ENCODE measurements at regions of chr1 and their contacts with region 1.

Region 1: DNA sequence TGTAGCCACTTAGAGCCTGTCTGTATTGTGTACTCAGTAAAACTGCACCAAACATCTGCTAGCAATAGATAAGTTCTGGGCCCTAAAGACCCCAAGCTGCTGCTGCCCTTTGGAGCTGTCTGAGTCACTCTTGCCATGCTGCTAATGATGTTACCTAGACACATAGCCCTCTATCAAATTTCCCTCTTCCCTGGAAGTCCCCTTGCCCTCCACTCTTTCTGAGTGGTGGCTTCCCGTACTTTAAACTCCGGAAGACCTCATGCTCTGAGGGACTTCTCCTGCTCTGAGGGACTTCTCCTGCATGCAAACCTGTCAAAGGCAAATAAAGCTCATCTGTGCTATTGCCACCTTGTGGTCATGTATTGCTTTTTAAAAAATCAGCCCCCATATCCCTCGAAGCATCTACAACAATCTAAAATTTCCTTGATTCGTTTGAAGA is 34.0 kb downstream of the FH start:
- DNase-seq: peak; percentile 73
- ATAC-seq: peak; percentile 18; the same call in 1 of the 2 replicates
- H3K4me3 ChIP-seq: no peak overlapping the region
- H3K27ac ChIP-seq: no peak overlapping the region; the same call in 1 of the 2 replicates
- H3K4me1 ChIP-seq: peaks cover 58% of the 10 kb centered on the region
- H3K27me3 ChIP-seq: no peaks in the 10 kb centered on the region
- CTCF ChIP-seq: peak; percentile 97

Region 2: DNA sequence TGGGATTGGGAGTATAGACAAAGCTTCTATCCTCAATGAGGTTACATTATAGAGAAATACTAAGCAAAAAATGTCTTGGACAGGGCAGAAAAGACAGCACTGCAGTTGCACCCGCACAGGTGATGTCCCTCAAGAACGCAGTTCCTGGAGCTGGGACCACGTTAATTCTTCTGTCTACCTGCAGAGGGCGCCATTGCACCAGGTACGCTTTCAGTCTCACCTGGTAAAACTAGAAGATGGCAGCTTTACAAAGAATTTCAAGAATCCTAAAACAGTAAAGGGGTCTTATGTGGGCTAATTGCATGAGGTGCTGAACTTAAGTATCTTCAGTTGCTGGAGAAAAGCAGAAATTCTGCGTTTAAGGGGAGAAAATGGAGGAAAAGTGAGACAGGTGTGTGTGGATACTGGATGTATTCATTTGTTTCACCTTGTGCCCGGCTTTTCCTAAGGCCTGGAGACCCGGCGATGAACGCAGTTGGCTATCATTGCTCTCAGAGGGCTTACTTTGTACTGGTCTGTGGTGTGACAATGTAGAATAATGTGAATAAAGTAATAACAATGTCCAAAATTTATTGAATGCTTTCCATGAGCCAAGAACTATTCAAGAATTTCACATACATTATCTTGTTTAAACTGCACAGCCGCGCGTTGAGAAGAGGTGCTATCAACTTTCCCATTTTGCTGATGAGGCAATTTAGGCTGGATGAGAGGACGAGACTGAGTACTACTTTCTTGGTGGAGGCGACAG is 597.4 kb before region 1 on chr1:
- CTCF ChIA-PET with region 1: no interaction called
- POLR2A ChIA-PET with region 1: no interaction called
- intact Hi-C with region 1: loop called (anchors 5 kb)
- DNase-seq: peak; percentile 83
- ATAC-seq: peak; percentile 64
- H3K4me3 ChIP-seq: no peak overlapping the region
- H3K27ac ChIP-seq: no peak overlapping the region
- H3K4me1 ChIP-seq: no peaks in the 10 kb centered on the region
- H3K27me3 ChIP-seq: peaks cover 25% of the 10 kb centered on the region
- CTCF ChIP-seq: peak; percentile 99

Region 3: GRCh38 chr1:240967070-240967724 is 518.4 kb before region 1 on chr1:
- CTCF ChIA-PET with region 1: no interaction called
- POLR2A ChIA-PET with region 1: no interaction called
- intact Hi-C with region 1: loop called (anchors 2 kb)
- DNase-seq: peak; percentile 84
- ATAC-seq: peak; percentile 60
- H3K4me3 ChIP-seq: no peak overlapping the region
- H3K27ac ChIP-seq: no peak overlapping the region
- H3K4me1 ChIP-seq: peaks cover 10% of the 10 kb centered on the region; the same call in 1 of the 2 replicates
- H3K27me3 ChIP-seq: peaks cover 86% of the 10 kb centered on the region
- CTCF ChIP-seq: peak; percentile 91

Region 4: GRCh38 chr1:241413386-241413785 is 72.2 kb before region 1 on chr1:
- CTCF ChIA-PET with region 1: no interaction called
- POLR2A ChIA-PET with region 1: no interaction called
- intact Hi-C with region 1: loop called (anchors 1 kb)
- DNase-seq: peak; percentile 98
- ATAC-seq: peak; percentile 94
- H3K4me3 ChIP-seq: no peak overlapping the region
- H3K27ac ChIP-seq: no peak overlapping the region
- H3K4me1 ChIP-seq: peaks cover 13% of the 10 kb centered on the region
- H3K27me3 ChIP-seq: no peaks in the 10 kb centered on the region
- CTCF ChIP-seq: no peak

Region 5: DNA sequence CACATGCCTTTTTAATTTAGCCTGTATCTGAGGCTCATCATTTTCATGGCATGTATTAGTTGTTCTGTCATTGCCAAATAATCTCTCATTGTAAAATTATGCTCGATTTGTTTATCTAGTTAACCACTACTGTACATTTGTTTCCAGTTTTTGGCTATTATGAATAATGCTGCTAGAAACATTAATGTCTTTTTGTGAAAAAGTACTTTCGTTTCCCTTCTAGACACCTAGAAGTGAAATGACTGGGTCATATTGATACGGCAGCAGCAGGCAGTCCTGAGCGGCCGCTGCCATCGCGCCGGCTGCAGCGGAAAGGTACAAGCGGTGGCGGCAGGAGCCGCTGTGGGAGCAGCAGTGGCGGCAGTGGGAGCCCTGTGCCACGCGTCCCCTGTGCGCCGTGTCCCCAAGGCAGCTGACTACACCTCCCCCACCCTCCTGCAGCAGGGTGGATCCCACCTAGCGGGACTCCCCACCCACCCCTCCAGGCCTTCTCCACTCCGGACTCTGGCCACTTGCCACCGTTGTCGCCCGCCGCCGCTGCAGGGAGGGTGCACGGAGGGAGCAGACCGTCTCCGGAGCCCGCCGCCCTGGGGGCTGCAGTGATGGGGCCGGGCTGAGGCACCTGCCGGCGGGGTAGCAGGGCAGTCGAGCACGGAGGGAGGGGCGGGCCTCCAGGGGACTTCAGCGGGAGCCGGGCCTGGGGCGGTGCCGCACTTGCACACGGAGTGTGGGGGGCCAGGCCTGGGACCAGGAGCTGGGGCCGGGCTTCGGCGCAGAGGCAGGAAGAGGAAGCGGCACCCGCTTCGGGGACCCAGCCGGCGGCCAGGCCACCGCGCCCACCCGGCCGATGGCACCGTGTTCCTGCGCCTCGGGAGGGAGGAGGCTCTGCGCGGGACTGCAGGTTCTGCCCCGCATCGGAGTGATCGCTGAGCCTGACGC is 61.8 kb before region 1 on chr1:
- CTCF ChIA-PET with region 1: interaction called, 3 read pairs
- POLR2A ChIA-PET with region 1: no interaction called
- intact Hi-C with region 1: loop called (anchors 1 kb)
- DNase-seq: peak; percentile 74
- ATAC-seq: peak; percentile 87
- H3K4me3 ChIP-seq: peak overlapping the region; percentile 78
- H3K27ac ChIP-seq: no peak overlapping the region
- H3K4me1 ChIP-seq: peaks cover 24% of the 10 kb centered on the region
- H3K27me3 ChIP-seq: no peaks in the 10 kb centered on the region
- CTCF ChIP-seq: peak; percentile 70

Region 6: GRCh38 chr1:241432241-241432640 is 53.3 kb before region 1 on chr1:
- CTCF ChIA-PET with region 1: no interaction called
- POLR2A ChIA-PET with region 1: interaction called, 18 read pairs
- intact Hi-C with region 1: no loop called
- DNase-seq: peak; percentile 74
- ATAC-seq: peak; percentile 90
- H3K4me3 ChIP-seq: no peak overlapping the region
- H3K27ac ChIP-seq: no peak overlapping the region
- H3K4me1 ChIP-seq: peaks cover 16% of the 10 kb centered on the region
- H3K27me3 ChIP-seq: no peaks in the 10 kb centered on the region
- CTCF ChIP-seq: no peak

Region 7: DNA sequence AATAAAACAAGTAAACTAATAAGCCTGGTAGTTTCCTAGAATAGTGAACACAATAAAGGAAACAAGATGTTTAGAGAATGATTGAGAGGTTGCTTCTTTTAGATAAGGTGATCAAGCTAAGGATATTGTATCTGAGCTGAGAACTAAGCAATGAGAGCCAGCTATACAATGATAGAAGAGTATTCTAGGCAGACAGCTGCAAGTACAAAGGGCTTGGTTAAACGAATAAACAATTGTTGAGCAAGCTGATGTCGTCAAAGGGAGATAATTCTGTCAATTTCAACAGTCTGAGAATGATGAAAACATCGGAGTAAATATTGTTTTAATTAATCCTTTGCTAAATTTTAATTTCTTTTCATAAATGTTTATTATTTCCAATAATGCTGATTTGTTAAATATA is 39.5 kb after region 1 on chr1:
- CTCF ChIA-PET with region 1: no interaction called
- POLR2A ChIA-PET with region 1: no interaction called
- intact Hi-C with region 1: no loop called
- DNase-seq: no peak
- ATAC-seq: no peak
- H3K4me3 ChIP-seq: no peak overlapping the region
- H3K27ac ChIP-seq: no peak overlapping the region
- H3K4me1 ChIP-seq: peaks cover 9% of the 10 kb centered on the region
- H3K27me3 ChIP-seq: no peaks in the 10 kb centered on the region
- CTCF ChIP-seq: no peak

Region 8: DNA sequence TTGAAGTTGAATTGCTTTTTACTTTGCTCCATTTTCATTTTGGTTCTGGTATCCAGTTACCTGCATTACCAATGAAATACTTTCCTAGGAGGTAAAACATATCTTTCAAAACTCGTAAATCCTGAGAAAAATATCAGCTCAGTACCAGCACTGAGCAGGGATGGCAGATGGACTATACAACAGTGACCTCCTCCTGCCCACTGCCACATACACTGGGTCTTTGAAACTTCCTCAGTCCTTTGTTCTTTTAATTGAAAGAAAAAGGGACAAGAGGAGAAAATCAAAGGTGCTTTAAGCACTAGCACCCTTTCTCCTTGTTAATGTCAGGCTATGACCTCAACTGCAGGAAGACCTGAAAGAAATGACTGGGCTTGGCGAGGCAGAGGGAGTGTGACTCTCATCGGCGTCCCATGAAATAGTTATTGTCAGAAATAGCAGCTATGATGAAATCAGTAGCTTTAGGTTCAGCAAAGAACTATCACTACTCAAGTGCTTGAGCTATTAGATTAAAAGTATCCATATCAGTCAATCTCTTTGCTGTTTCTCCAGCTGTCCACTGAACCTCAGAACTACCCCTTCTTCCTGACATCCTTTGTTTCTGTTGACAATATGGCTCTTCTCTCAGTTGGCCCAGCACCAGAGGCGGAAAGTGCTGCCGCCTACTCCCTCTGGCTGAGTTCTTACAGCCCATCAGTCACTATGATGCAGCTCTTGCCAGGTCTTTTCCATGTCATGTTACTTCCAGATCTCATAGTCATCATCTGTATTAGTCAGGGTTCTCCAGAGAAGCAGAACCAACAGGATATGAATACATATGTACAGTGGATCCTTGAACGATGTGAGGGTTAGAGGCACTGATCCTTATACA is 720.3 kb after region 1 on chr1:
- CTCF ChIA-PET with region 1: no interaction called
- POLR2A ChIA-PET with region 1: no interaction called
- intact Hi-C with region 1: no loop called
- DNase-seq: peak; percentile 64
- ATAC-seq: peak; percentile 71
- H3K4me3 ChIP-seq: no peak overlapping the region
- H3K27ac ChIP-seq: peak overlapping the region; percentile 33
- H3K4me1 ChIP-seq: peaks cover 4% of the 10 kb centered on the region; the same call in 1 of the 2 replicates
- H3K27me3 ChIP-seq: no peaks in the 10 kb centered on the region
- CTCF ChIP-seq: no peak

Measured in PC-3 (cell line).